Naive thymus-derived CD4-positive, alpha-beta T cell (primary cell): ENCODE measurements at regions of chr10 and their contacts with region 1.

Region 1: DNA sequence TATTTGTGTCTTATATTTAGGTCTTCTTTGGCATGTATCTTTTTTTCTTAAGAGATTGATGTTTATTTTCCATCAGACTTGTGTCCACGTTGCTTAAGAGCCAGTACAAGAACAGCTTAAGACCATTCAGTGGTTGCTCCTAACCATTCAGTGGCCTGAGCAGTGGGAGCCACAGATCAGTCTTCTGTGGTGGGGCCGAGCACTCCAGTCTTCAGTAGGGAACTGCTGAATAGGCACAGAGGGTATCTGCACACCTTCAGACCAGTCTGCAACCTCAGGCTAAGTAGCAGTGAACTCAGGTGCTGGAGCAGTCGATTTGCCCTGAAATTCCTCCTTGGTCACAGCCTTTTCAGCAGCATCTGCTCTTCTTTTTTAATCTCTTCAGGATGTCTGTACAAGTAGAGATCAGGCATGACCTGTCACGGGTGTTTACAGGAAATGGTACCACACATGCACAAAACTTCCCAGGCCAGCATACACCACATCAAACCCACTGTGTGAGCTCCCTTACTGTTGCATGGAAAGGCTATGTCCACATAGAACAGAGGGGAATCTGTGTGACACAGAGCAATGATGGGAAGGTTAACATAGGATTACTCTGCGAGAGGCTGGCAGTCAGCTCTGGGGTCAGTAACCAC is 51.5 kb downstream of the FAM107B start:
- DNase-seq: peak in 8 of 9 donors; percentile 24 to 64 (median 52)
- ATAC-seq: peak; percentile 90
- H3K4me3 ChIP-seq: peak overlapping the region; percentile 36
- H3K4me3 Mint-ChIP-seq: peak overlapping the region; percentile 9 to 71 (median 58)
- H3K27ac ChIP-seq: peak overlapping the region; percentile 53
- H3K27ac Mint-ChIP-seq: peak overlapping the region; percentile 47 to 97 (median 92)
- H3K4me1 ChIP-seq: peaks cover 17 to 33% of the 10 kb centered on the region in 2 donors
- H3K4me1 Mint-ChIP-seq: peaks cover 31 to 43% (median 37%) of the 10 kb centered on the region in 7 donors
- H3K27me3 ChIP-seq: no peaks in the 10 kb centered on the region
- H3K27me3 Mint-ChIP-seq: no peaks in the 10 kb centered on the region

Region 2: DNA sequence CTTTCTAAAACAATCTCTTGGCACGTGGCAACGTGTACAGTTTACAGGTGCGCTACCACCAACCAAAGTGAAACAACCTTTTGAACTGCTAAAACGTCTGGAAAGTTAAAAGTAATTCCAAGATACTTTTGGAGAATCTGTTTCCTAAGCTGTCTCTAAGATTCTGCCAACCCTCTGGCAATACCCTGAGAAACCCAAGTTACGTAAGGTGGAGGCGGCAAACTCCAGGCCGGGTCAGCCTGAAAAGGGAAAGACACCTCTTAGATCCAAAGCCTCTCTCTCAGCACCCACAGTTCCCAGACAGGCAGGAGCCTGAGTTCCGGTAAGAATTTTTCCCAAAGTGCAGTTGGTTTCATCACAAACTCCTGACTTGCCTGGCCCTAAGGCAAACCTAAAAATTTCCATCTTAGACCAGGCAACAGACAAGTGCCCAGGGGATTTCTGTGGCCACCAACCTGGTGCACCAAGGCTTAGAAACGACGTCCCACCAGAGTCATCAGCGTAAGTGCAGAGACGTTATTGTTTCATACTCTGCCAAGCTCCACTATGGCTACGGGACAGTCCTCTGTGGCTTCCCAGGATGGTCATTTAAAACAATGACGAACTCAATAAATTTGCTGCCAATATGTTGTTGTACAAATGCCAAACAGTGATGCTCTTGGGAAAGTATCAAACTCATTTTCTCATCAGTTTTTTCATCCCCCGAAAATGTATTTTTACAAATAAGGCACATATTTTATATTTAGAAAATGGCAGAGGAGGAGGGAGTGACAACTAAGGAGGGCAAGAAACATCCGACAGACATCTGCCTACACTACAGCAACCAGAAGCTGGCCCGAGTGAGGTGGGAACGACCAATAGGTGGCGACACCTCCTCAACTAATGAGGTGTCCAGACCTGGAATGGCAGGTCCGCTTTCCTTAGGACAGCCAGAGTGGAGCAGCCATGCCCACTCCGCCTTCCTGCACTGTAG is 186.6 kb before region 1 on chr10:
- CTCF ChIA-PET with region 1: no interaction called
- POLR2A ChIA-PET with region 1: no interaction called
- intact Hi-C with region 1: loop called in 1 of 2 experiments (anchors 5 kb)
- DNase-seq: peak in 3 of 9 donors; percentile 29 to 47 (median 31)
- ATAC-seq: peak; percentile 72
- H3K4me3 ChIP-seq: no peak overlapping the region
- H3K4me3 Mint-ChIP-seq: no peak overlapping the region
- H3K27ac ChIP-seq: no peak overlapping the region
- H3K27ac Mint-ChIP-seq: peak overlapping the region in 6 of 9 donors; percentile 31 to 83 (median 72)
- H3K4me1 ChIP-seq: peaks cover 4 to 31% of the 10 kb centered on the region in 2 donors
- H3K4me1 Mint-ChIP-seq: peaks cover 55 to 97% (median 90%) of the 10 kb centered on the region in 7 donors
- H3K27me3 ChIP-seq: no peaks in the 10 kb centered on the region
- H3K27me3 Mint-ChIP-seq: no peaks in the 10 kb centered on the region

Region 3: GRCh38 chr10:14659626-14660196 is 63.5 kb before region 1 on chr10:
- CTCF ChIA-PET with region 1: no interaction called
- POLR2A ChIA-PET with region 1: no interaction called
- intact Hi-C with region 1: loop called in 1 of 2 experiments (anchors 5 kb)
- DNase-seq: peak in 5 of 9 donors; percentile 14 to 75 (median 55)
- ATAC-seq: peak; percentile 87
- H3K4me3 ChIP-seq: peak overlapping the region; percentile 7
- H3K4me3 Mint-ChIP-seq: peak overlapping the region; percentile 52 to 79 (median 74)
- H3K27ac ChIP-seq: peak overlapping the region; percentile 62
- H3K27ac Mint-ChIP-seq: peak overlapping the region; percentile 74 to 97 (median 86)
- H3K4me1 ChIP-seq: peaks cover 24 to 34% of the 10 kb centered on the region in 2 donors
- H3K4me1 Mint-ChIP-seq: peaks cover 42 to 81% (median 57%) of the 10 kb centered on the region in 7 donors
- H3K27me3 ChIP-seq: no peaks in the 10 kb centered on the region
- H3K27me3 Mint-ChIP-seq: peaks cover 0 to 2% (median 0%) of the 10 kb centered on the region in 5 donors

Region 4: DNA sequence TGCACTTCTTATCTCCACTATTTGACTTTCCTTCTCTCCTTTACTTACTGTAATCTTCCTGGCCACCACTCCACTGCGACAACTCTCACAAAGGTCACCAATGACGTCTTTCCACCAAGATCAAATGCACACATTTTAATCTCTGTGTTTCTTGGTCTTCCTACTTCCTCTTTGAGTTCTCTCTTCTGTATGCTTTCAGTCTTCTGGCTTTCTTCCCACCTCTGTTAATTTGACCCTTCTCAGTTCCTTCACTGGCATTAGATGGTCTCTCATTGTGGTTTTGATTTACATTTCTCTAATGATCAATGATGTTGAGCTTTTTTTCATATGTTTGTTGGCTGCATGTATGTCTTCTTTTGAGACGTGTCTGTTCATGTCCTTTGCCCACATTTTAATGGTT is 19.6 kb after region 1 on chr10:
- CTCF ChIA-PET with region 1: interaction called, 3 read pairs
- POLR2A ChIA-PET with region 1: interaction called, 3 read pairs
- intact Hi-C with region 1: loop called in 1 of 2 experiments (anchors 2 kb)
- DNase-seq: peak in 3 of 9 donors; percentile 2 to 34 (median 9)
- ATAC-seq: peak; percentile 54
- H3K4me3 ChIP-seq: no peak overlapping the region
- H3K4me3 Mint-ChIP-seq: peak overlapping the region in 7 of 10 donors; percentile 3 to 50 (median 14)
- H3K27ac ChIP-seq: no peak overlapping the region
- H3K27ac Mint-ChIP-seq: peak overlapping the region in 8 of 9 donors; percentile 4 to 50 (median 26)
- H3K4me1 ChIP-seq: peaks cover 0 to 4% of the 10 kb centered on the region in 2 donors
- H3K4me1 Mint-ChIP-seq: peaks cover 7 to 36% (median 27%) of the 10 kb centered on the region in 7 donors
- H3K27me3 ChIP-seq: no peaks in the 10 kb centered on the region
- H3K27me3 Mint-ChIP-seq: no peaks in the 10 kb centered on the region

Region 5: DNA sequence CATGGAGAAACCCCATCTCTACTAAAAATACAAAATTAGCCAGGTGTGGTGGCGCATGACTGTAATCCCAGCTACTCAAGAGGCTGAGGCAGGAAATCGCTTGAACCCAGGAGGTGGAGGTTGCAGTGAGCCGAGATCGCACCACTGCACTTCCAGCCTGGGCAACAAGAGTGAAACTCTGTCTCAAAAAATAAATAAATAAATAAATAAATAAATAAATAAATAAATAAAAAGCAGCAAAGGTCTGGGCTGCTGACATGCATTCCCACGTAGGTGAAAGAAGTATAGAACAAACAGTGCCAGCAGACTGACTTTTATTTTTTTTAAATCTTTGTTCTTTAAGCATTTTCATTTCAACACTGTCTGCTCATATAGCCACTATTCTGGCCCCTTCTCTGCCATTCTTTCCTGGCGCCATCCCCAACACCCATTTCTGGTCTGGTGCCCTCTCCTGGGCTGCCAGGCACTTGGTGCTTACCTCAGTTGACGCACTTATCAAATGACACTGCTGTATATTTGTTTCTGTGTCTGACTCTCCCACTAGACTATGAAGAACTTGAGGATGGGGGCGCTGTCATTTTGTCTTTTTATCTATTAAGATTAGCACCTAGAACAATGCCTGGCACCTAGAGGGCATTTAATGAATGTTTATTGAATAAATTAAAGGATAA is 36.0 kb after region 1 on chr10:
- CTCF ChIA-PET with region 1: no interaction called
- POLR2A ChIA-PET with region 1: no interaction called
- intact Hi-C with region 1: no loop called
- DNase-seq: peak in 1 of 9 donors; percentile 25
- ATAC-seq: no peak
- H3K4me3 ChIP-seq: no peak overlapping the region
- H3K4me3 Mint-ChIP-seq: no peak overlapping the region
- H3K27ac ChIP-seq: no peak overlapping the region
- H3K27ac Mint-ChIP-seq: no peak overlapping the region
- H3K4me1 ChIP-seq: no peaks in the 10 kb centered on the region
- H3K4me1 Mint-ChIP-seq: peaks cover 0 to 12% (median 8%) of the 10 kb centered on the region in 7 donors
- H3K27me3 ChIP-seq: no peaks in the 10 kb centered on the region
- H3K27me3 Mint-ChIP-seq: peaks cover 0 to under 1% (median 0%) of the 10 kb centered on the region in 5 donors